GM13977 (cell line): ENCODE measurements at regions of chr7 and their contacts with region 1.

Region 1: GRCh38 chr7:156816943-156817572 is 75.9 kb downstream of the LMBR1 start:
- DNase-seq: peak; percentile 16
- CTCF ChIP-seq: peak; percentile 51

Region 2: GRCh38 chr7:156473476-156474240 is 343.4 kb before region 1 on chr7:
- in situ Hi-C with region 1: loop called (anchors 25 kb)
- DNase-seq: peak; percentile 73
- CTCF ChIP-seq: peak; percentile 75

Region 3: DNA sequence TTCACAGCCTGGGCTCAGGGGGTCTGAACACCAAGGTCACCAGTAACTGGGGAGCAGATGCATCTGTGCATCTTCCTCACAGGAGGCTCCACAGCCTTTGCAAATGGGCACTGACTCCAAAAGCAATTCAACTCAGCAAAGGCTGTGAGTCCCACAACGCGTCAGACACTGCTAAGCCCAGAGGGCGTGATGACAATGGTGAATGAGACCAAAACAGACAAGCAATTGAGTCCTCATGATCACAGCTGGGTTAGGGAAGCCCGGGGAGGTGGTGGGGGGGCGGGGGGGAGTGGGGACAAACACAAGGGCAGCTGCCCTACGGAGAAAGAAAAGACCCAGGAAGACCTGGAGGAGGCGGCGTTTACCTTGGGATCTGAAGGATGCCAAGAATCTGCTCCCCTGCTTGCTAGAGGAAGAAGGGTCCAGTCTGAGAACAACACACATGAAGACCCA is 238.1 kb before region 1 on chr7:
- in situ Hi-C with region 1: no loop called
- DNase-seq: no peak
- CTCF ChIP-seq: no peak

Region 4: DNA sequence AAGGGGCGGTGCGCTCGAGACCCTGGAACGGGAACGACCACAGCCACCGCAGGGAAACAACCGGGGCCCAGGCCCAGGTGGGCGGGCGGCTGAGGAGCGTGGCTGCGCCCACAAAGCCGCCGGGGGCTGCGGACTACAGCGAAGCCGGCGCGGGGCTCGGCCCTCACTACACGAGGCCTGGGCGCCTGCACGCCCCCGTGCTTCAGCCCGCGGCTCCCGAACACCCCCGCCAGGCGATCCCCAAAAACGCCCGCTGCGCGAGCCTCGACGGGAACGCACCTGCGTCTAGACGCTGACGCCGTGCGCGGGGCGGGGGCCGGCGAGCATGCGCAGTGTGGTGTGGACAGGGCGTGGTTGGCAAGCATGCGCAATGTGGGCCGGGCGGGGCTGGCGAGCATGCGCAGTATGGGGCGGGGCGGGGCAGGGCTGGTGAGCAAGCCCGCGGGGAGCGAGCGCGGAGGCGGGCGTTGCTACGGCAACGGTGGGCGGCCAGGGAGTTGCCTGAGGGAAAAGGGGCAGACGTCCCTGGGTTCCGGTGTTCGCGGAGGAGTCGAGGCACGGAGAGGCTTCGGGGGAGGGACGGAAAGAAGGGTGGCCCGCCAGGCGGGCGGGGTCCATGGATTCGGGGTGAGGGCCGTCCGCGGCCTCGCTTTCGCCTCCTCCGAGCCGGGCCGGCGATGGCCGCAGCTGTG is 176.7 kb before region 1 on chr7 and contains the start of gene RNF32:
- in situ Hi-C with region 1: loop called (anchors 10 kb)
- DNase-seq: peak; percentile 98
- CTCF ChIP-seq: no peak